ENCODE measurements at regions of chr18 and their contacts with region 1.

Region 1: DNA sequence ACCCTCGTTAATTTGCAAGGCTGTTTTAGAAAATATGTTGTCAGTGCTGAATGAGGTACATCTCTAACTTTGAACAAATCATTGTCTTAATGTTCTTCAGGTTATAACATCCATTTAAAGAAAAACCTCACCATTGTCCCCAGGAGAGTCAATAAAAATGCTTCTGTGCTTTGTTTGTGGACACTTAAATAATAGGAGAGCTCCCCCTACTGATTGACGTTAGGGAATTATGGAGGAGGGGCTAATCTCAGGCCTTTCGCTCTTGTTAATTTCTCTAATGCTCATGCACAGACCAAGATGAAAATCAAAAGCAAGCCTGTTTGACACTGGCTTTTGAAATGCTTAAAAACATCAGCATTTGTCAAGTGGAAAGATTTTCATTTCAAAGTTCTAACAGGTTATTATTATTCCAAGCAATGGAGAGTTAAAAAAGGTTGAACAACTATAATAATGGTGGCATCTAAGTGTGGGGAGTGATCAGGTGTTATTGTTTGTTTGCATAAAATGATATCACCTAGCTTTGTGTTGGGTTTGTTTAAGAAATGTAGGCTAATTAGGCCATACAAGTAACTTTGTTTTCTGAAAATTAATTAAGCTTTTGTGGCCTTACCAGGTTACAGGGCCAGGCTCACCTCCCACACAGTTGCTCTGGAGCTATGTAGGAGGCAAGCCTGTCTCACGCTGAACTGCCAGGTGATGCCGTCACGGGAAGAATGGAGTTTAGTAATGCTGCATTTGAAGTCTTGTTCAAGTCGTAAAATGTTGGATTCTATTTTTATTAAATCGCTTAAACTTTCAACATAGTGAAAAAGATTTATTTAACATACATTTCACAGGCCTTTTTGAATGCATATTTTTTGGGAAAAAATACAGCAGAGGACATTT is 51.7 kb upstream of the SMIM21 start:
- DNase-seq: no peak
- ATAC-seq: peak; percentile 61 to 63
- H3K4me3 ChIP-seq: no peak overlapping the region
- H3K27ac ChIP-seq: no peak overlapping the region
- H3K4me1 ChIP-seq: no peaks in the 10 kb centered on the region
- H3K27me3 ChIP-seq: no peaks in the 10 kb centered on the region
- CTCF ChIP-seq: peak in 4 of 5 experiments; percentile 41 to 63 (median 56)
- POLR2A ChIP-seq: no peak

Region 2: GRCh38 chr18:74645679-74646078 is 833.6 kb before region 1 on chr18:
- in situ Hi-C with region 1: loop called (anchors 10 to 25 kb)
- intact Hi-C with region 1: no loop called
- DNase-seq: no peak
- ATAC-seq: no peak
- H3K4me3 ChIP-seq: no peak overlapping the region
- H3K27ac ChIP-seq: no peak overlapping the region
- H3K4me1 ChIP-seq: no peaks in the 10 kb centered on the region
- H3K27me3 ChIP-seq: no peaks in the 10 kb centered on the region
- CTCF ChIP-seq: no peak
- POLR2A ChIP-seq: no peak

Region 3: GRCh38 chr18:74652392-74652988 is 826.7 kb before region 1 on chr18:
- in situ Hi-C with region 1: loop called (anchors 10 to 25 kb)
- intact Hi-C with region 1: loop called (anchors 2 kb)
- DNase-seq: no peak
- ATAC-seq: peak in 1 of 2 donors; percentile 55
- H3K4me3 ChIP-seq: no peak overlapping the region
- H3K27ac ChIP-seq: no peak overlapping the region
- H3K4me1 ChIP-seq: no peaks in the 10 kb centered on the region
- H3K27me3 ChIP-seq: no peaks in the 10 kb centered on the region
- CTCF ChIP-seq: peak; percentile 23 to 53 (median 42)
- POLR2A ChIP-seq: no peak

Region 4: GRCh38 chr18:74896390-74896991 is 582.7 kb before region 1 on chr18:
- in situ Hi-C with region 1: loop called in 1 of 4 experiments (anchors 25 kb)
- intact Hi-C with region 1: loop called (anchors 1 kb)
- DNase-seq: peak; percentile 21 to 55
- ATAC-seq: peak; percentile 81 to 99
- H3K4me3 ChIP-seq: no peak overlapping the region
- H3K27ac ChIP-seq: no peak overlapping the region
- H3K4me1 ChIP-seq: no peaks in the 10 kb centered on the region
- H3K27me3 ChIP-seq: no peaks in the 10 kb centered on the region
- CTCF ChIP-seq: peak; percentile 33 to 72 (median 40)
- POLR2A ChIP-seq: no peak

Region 5: GRCh38 chr18:75161256-75162028 is 317.8 kb before region 1 on chr18:
- in situ Hi-C with region 1: loop called in 2 of 4 experiments (anchors 25 kb)
- intact Hi-C with region 1: loop called (anchors 10 kb)
- DNase-seq: peak in 1 of 2 donors; percentile 65
- ATAC-seq: peak; percentile 68 to 86
- H3K4me3 ChIP-seq: peak overlapping the region; percentile 53 to 59 (median 55)
- H3K27ac ChIP-seq: peak overlapping the region; percentile 22 to 60 (median 32)
- H3K4me1 ChIP-seq: peaks cover 16 to 18% of the 10 kb centered on the region in 2 donors
- H3K27me3 ChIP-seq: no peaks in the 10 kb centered on the region
- CTCF ChIP-seq: peak in 2 of 5 experiments; percentile 16 to 40
- POLR2A ChIP-seq: no peak

Region 6: GRCh38 chr18:75462178-75462832 is 16.9 kb before region 1 on chr18:
- in situ Hi-C with region 1: no loop called
- intact Hi-C with region 1: no loop called
- DNase-seq: no peak
- ATAC-seq: no peak
- H3K4me3 ChIP-seq: no peak overlapping the region
- H3K27ac ChIP-seq: no peak overlapping the region
- H3K4me1 ChIP-seq: no peaks in the 10 kb centered on the region
- H3K27me3 ChIP-seq: no peaks in the 10 kb centered on the region
- CTCF ChIP-seq: no peak
- POLR2A ChIP-seq: no peak

Region 7: DNA sequence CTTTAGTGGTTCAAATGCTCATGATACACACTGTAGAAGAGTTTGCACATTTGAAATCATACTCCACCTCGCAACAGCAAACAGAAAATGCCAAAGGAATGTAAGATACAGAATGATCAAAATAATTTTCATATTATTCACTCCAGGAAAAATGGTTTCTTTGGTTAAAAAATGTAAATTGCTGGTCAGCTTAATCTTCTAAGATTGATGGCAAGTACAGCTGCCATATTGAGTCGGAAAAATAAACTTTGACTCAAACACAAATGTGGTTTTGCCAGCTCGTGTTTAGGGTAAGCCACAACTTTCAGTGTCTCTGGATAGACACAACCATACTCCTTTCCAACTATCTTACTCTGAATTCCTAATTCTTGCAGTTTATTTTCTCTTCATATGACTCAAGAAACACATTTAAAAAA is 103.2 kb after region 1 on chr18:
- in situ Hi-C with region 1: loop called in 1 of 4 experiments (anchors 25 kb)
- intact Hi-C with region 1: no loop called
- DNase-seq: no peak
- ATAC-seq: no peak
- H3K4me3 ChIP-seq: no peak overlapping the region
- H3K27ac ChIP-seq: no peak overlapping the region
- H3K4me1 ChIP-seq: no peaks in the 10 kb centered on the region
- H3K27me3 ChIP-seq: no peaks in the 10 kb centered on the region
- CTCF ChIP-seq: no peak
- POLR2A ChIP-seq: no peak